Activated CD8-positive, alpha-beta T cell treated with anti-CD3 and anti-CD28 coated beads, Interleukin-2, amount 10 ng/mL, durations not matched to agents 7 days and 5 days (primary cell): ENCODE measurements at regions of chr20 and their contacts with region 1.

Region 1: GRCh38 chr20:54062812-54063280 is 7.5 kb downstream of the BCAS1 start:
- DNase-seq: no peak
- ATAC-seq: peak; percentile 61
- H3K4me3 Mint-ChIP-seq: no peak overlapping the region
- H3K27ac Mint-ChIP-seq: no peak overlapping the region
- H3K4me1 Mint-ChIP-seq: peaks cover 7% of the 10 kb centered on the region
- H3K27me3 Mint-ChIP-seq: no peaks in the 10 kb centered on the region

Region 2: GRCh38 chr20:53949319-53949889 is 113.4 kb before region 1 on chr20:
- CTCF ChIA-PET with region 1: interaction called, 14 read pairs
- POLR2A ChIA-PET with region 1: no interaction called
- DNase-seq: peak; percentile 89
- ATAC-seq: peak; percentile 89
- H3K4me3 Mint-ChIP-seq: peak overlapping the region; percentile 63
- H3K27ac Mint-ChIP-seq: peak overlapping the region; percentile 97
- H3K4me1 Mint-ChIP-seq: peaks cover 40% of the 10 kb centered on the region
- H3K27me3 Mint-ChIP-seq: no peaks in the 10 kb centered on the region

Region 3: GRCh38 chr20:54041336-54041735 is 21.5 kb before region 1 on chr20:
- CTCF ChIA-PET with region 1: no interaction called
- POLR2A ChIA-PET with region 1: no interaction called
- DNase-seq: no peak
- ATAC-seq: no peak
- H3K4me3 Mint-ChIP-seq: no peak overlapping the region
- H3K27ac Mint-ChIP-seq: no peak overlapping the region
- H3K4me1 Mint-ChIP-seq: no peaks in the 10 kb centered on the region
- H3K27me3 Mint-ChIP-seq: peaks cover 16% of the 10 kb centered on the region

Region 4: DNA sequence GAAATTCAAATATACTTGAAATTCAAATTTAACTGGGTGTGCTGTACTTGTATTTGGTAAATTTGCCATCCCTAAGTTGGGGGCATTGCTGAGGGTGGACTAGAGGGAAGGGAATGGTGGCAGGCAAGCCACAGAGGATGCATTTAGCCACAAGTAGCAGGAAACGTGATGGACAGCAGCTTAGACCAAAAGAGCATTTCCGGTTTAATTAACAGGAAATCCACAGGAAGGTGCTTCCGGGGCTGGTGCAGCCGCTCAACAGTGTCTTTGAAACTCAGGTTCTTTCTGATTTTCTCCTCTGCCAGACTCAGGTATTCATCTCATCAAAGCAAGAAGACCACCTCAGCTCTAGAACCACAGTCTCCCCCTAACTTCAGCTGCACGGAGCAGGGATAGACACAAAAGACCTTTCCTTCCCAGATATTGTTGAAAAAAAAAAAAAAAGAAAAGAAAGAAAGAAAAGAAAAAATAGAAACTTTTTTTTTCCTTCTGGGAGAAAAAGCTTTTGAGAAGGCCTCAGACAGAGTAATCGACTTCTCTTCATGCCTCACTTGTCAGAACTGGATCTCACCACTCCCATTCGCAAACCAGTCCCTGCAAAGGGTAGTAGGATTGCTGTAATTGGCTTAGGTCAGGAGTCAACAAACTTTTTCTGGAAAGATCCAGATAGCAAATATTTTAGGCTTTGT is 15.6 kb after region 1 on chr20:
- CTCF ChIA-PET with region 1: interaction called, 17 read pairs
- POLR2A ChIA-PET with region 1: no interaction called
- DNase-seq: peak; percentile 69
- ATAC-seq: peak; percentile 83
- H3K4me3 Mint-ChIP-seq: peak overlapping the region; percentile 69
- H3K27ac Mint-ChIP-seq: peak overlapping the region; percentile 90
- H3K4me1 Mint-ChIP-seq: peaks cover 49% of the 10 kb centered on the region
- H3K27me3 Mint-ChIP-seq: no peaks in the 10 kb centered on the region

Region 5: GRCh38 chr20:54606380-54606997 is 543.6 kb after region 1 on chr20:
- CTCF ChIA-PET with region 1: no interaction called
- POLR2A ChIA-PET with region 1: no interaction called
- DNase-seq: no peak
- ATAC-seq: no peak
- H3K4me3 Mint-ChIP-seq: no peak overlapping the region
- H3K27ac Mint-ChIP-seq: no peak overlapping the region
- H3K4me1 Mint-ChIP-seq: no peaks in the 10 kb centered on the region
- H3K27me3 Mint-ChIP-seq: no peaks in the 10 kb centered on the region